CD14-positive monocyte (primary cell): ENCODE measurements at regions of chr12 and their contacts with region 1.

Region 1: GRCh38 chr12:109393437-109394345 is 46.0 kb downstream of the MYO1H start:
- DNase-seq: peak; percentile 15 to 50 (median 39)
- H3K4me3 ChIP-seq: no peak overlapping the region
- H3K4me3 Mint-ChIP-seq: no peak overlapping the region
- H3K27ac ChIP-seq: no peak overlapping the region
- H3K27ac Mint-ChIP-seq: no peak overlapping the region
- H3K4me1 ChIP-seq: no peaks in the 10 kb centered on the region
- H3K4me1 Mint-ChIP-seq: no peaks in the 10 kb centered on the region
- H3K27me3 ChIP-seq: no peaks in the 10 kb centered on the region
- H3K27me3 Mint-ChIP-seq: peaks cover 2 to 24% (median 10%) of the 10 kb centered on the region in 3 donors
- CTCF ChIP-seq: peak; percentile 92

Region 2: DNA sequence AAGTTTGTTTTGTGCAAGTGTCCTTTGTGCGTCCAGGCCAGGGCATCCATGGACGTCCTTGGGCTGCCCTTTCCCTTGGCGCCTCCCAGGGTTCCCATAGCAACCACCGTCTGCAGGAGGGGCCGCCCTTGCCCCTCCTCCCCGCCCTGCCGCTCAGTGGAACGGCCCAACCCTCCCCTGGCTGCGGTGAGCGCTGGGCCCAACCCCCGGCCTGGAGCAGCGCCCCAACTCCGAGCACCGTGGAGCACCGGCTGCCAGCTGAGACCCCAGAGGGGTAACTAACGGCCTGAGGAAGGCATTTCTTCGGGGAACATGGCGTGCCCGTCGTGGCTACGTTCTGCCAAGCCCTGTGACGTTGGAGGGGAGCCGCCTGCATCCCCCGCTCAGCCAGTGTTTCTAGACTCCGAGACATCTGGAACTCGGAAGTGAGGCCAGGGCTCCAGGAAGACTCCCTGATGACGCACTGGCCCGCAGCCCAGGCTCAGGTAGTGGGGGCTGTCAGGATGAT is 282.6 kb before region 1 on chr12:
- intact Hi-C with region 1: loop called (anchors 5 kb)
- DNase-seq: peak; percentile 38 to 55 (median 50)
- H3K4me3 ChIP-seq: peak overlapping the region; percentile 36 to 72 (median 54)
- H3K4me3 Mint-ChIP-seq: peak overlapping the region; percentile 79 to 87
- H3K27ac ChIP-seq: peak overlapping the region; percentile 41 to 61
- H3K27ac Mint-ChIP-seq: peak overlapping the region; percentile 30 to 89 (median 64)
- H3K4me1 ChIP-seq: peaks cover 6 to 10% of the 10 kb centered on the region in 2 donors
- H3K4me1 Mint-ChIP-seq: peaks cover 18% of the 10 kb centered on the region
- H3K27me3 ChIP-seq: no peaks in the 10 kb centered on the region
- H3K27me3 Mint-ChIP-seq: peaks cover 0 to 2% (median 1%) of the 10 kb centered on the region in 3 donors
- CTCF ChIP-seq: no peak

Region 3: DNA sequence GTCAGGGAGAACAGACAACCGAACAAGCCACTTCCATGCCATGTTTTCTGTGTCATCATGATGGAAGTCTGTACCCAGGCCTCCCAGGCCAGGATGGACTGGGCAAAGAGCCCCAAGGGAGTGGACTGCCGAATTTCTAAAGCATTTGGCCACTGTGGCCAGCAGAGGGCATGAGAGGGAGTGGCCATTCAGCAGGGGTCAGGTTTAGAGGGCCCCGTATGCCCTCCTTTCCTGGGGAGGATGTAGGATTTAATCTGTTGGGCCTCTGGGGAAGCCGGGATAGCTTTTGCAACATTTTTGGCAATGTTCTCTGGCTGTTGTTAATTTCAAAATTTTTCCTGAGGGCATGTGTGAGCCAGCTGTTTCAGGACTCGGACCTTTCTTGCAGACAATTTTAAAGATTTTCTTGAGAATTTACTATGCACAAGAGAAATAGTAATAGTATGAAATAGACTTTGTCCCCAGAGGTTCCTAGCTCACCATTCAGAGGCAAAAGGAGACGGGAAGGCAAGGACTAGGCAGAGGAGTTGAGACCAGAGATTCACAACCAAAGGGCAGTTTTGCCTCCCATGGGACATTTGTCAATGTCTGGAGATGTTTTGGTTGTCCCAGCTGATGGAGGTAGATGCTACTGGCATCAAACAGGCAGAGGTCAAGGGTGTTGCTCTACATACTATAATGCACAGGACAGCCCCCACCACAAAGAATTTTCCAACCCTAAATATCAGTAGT is 259.3 kb before region 1 on chr12:
- intact Hi-C with region 1: loop called in 1 of 2 experiments (anchors 5 kb)
- DNase-seq: peak in 2 of 3 donors; percentile 7 to 13
- H3K4me3 ChIP-seq: no peak overlapping the region
- H3K4me3 Mint-ChIP-seq: no peak overlapping the region
- H3K27ac ChIP-seq: no peak overlapping the region
- H3K27ac Mint-ChIP-seq: no peak overlapping the region
- H3K4me1 ChIP-seq: no peaks in the 10 kb centered on the region
- H3K4me1 Mint-ChIP-seq: no peaks in the 10 kb centered on the region
- H3K27me3 ChIP-seq: no peaks in the 10 kb centered on the region
- H3K27me3 Mint-ChIP-seq: peaks cover 0 to 2% (median 0%) of the 10 kb centered on the region in 3 donors
- CTCF ChIP-seq: peak; percentile 79

Region 4: GRCh38 chr12:109449845-109450532 is 56.3 kb after region 1 on chr12:
- intact Hi-C with region 1: no loop called
- DNase-seq: no peak
- H3K4me3 ChIP-seq: no peak overlapping the region
- H3K4me3 Mint-ChIP-seq: no peak overlapping the region
- H3K27ac ChIP-seq: no peak overlapping the region
- H3K27ac Mint-ChIP-seq: peak overlapping the region in 1 of 7 donors; percentile 74
- H3K4me1 ChIP-seq: no peaks in the 10 kb centered on the region
- H3K4me1 Mint-ChIP-seq: no peaks in the 10 kb centered on the region
- H3K27me3 ChIP-seq: no peaks in the 10 kb centered on the region
- H3K27me3 Mint-ChIP-seq: no peaks in the 10 kb centered on the region
- CTCF ChIP-seq: no peak

Region 5: DNA sequence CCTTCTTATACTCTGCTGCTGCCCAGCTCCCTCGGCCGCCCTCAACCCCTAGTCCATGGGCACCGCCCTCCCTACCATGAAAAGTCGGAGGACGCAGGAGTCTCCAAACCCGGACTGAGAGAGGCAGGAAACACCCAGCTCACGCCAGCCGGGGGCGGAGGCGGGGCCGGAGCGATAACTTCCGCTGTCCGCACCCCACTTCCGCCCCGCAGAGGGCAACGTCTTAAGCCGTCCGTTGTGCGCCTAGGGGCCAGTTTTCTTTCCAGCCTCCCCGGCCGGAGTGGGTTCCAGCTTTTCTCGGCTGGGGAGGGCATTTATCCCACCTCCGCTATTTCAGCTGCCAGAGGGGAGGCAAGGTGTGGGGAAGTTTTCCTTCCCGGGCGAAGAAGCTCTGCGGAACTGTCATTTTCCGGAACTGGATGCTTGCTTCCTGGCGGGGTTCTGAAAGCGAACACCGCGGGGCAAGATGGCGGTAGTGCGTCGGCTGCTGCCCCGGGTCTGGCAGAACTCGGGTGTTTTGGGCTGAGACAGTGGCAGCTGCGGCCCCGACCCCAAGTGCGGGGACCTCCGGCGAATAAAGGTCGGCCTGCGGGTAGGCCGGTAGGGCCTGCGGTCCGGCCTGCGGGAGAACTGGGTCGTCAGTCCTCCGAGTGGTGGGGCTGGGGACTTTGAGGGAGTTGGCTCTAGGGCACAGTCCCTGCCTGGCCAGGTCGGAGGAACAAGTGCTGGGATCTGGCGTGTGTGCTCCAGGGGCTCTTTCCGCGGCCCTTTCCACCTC is 83.7 kb after region 1 on chr12 and contains the starts of genes KCTD10 and UBE3B:
- intact Hi-C with region 1: no loop called
- DNase-seq: peak; percentile 88 to 90 (median 88)
- H3K4me3 ChIP-seq: peak within 1 kb of the TSS; percentile 74 to 95 (median 81)
- H3K4me3 Mint-ChIP-seq: peak within 1 kb of the TSS; percentile 93 to 96
- H3K27ac ChIP-seq: peak within 1 kb of the TSS; percentile 85 to 93
- H3K27ac Mint-ChIP-seq: peak within 1 kb of the TSS; percentile 92 to 100 (median 100)
- H3K4me1 ChIP-seq: peaks cover 20 to 28% of the 10 kb centered on the region in 2 donors
- H3K4me1 Mint-ChIP-seq: peaks cover 24% of the 10 kb centered on the region
- H3K27me3 ChIP-seq: no peaks in the 10 kb centered on the region
- H3K27me3 Mint-ChIP-seq: no peaks in the 10 kb centered on the region
- CTCF ChIP-seq: no peak
- polyA plus RNA-seq, gene KCTD10: 18.1 to 21.0 (median 20.0) TPM
- polyA plus RNA-seq, gene UBE3B: 14.4 to 25.9 (median 18.2) TPM